MCF 10A (cell line): ENCODE measurements at regions of chr4 and their contacts with region 1.

Region 1: DNA sequence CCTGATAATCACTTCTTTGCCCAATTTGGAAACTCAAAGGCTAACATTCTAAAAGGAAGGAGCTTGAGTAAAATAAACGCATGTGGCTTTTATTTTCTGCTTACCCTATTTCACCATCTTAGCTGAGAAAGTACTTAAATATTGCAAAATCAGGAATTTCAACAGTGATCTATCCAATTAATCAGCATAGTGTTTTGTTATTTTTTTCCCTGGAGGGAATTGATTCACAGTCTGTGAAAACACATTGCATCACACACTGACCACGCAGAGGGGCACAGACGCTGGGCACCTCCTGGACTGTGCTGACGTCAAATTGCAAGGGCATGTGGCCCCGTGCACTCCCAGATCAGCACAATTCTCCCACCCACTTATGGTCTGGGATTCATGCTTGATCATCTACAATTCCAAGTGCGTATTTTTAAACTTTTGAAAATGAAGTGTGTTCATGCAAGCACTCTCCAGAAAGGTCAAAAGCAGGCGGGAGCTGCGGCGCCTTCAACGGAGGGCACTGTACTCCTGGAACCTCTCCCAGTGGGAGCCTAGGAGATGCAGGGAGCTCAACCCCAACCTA is 320.6 kb upstream of the PPARGC1A start:
- DNase-seq: peak; percentile 98
- H3K4me3 Mint-ChIP-seq: peak overlapping the region; percentile 18
- H3K27ac Mint-ChIP-seq: peak overlapping the region; percentile 85
- H3K4me1 Mint-ChIP-seq: peaks cover 36% of the 10 kb centered on the region
- H3K27me3 Mint-ChIP-seq: no peaks in the 10 kb centered on the region
- CTCF ChIP-seq: no peak

Region 2: DNA sequence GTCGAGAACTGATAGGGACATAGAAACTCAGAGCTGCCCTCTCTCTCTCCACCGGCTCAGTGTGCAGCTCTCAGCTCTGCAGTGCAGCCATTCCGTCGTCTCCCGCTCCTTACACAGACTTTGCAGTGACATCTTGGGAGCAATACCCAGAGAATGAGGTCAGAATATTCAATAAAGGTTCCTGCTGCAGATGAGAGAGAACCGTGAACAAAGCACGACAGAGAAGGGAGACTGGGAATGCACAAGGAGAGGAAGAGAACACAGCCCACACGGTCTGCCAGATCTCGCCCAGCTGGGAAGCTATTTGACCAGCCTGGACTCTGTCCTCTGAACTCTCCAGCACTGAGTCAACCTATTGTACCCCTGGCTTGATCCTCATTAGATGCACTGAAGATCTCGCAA is 202.6 kb before region 1 on chr4:
- CTCF ChIA-PET with region 1: no interaction called
- POLR2A ChIA-PET with region 1: interaction called, 3 read pairs
- intact Hi-C with region 1: loop called (anchors 10 kb)
- DNase-seq: no peak
- H3K4me3 Mint-ChIP-seq: no peak overlapping the region
- H3K27ac Mint-ChIP-seq: no peak overlapping the region
- H3K4me1 Mint-ChIP-seq: peaks cover 14% of the 10 kb centered on the region
- H3K27me3 Mint-ChIP-seq: no peaks in the 10 kb centered on the region
- CTCF ChIP-seq: no peak

Region 3: DNA sequence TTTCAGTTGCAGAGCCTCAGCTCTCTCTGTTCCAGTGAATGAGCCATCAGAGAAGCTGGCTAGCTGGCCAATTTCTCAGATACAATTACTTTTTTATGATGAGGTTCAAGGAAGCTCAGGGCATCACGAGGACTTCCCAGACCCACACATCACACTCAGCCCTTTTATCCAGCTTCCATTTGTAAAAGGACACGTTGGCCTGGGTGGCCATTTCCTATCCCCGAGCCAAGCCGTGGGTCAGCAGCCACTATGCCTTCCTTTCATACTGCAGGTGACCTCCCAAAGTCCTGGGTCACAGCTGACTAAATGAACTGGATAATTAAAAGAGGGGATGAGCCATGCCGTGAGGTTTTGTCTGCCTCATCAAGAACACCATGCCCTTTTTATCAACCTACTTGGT is 83.6 kb before region 1 on chr4:
- CTCF ChIA-PET with region 1: no interaction called
- POLR2A ChIA-PET with region 1: interaction called, 11 read pairs
- intact Hi-C with region 1: no loop called
- DNase-seq: no peak
- H3K4me3 Mint-ChIP-seq: no peak overlapping the region
- H3K27ac Mint-ChIP-seq: no peak overlapping the region
- H3K4me1 Mint-ChIP-seq: peaks cover 17% of the 10 kb centered on the region
- H3K27me3 Mint-ChIP-seq: no peaks in the 10 kb centered on the region
- CTCF ChIP-seq: no peak

Region 4: GRCh38 chr4:24273151-24273550 is 62.7 kb after region 1 on chr4:
- CTCF ChIA-PET with region 1: no interaction called
- POLR2A ChIA-PET with region 1: interaction called, 10 read pairs
- intact Hi-C with region 1: no loop called
- DNase-seq: peak; percentile 42
- H3K4me3 Mint-ChIP-seq: peak overlapping the region; percentile 28
- H3K27ac Mint-ChIP-seq: peak overlapping the region; percentile 94
- H3K4me1 Mint-ChIP-seq: peaks cover 20% of the 10 kb centered on the region
- H3K27me3 Mint-ChIP-seq: no peaks in the 10 kb centered on the region
- CTCF ChIP-seq: no peak

Region 5: GRCh38 chr4:24551492-24552289 is 341.3 kb after region 1 on chr4:
- CTCF ChIA-PET with region 1: no interaction called
- POLR2A ChIA-PET with region 1: no interaction called
- intact Hi-C with region 1: no loop called
- DNase-seq: no peak
- H3K4me3 Mint-ChIP-seq: no peak overlapping the region
- H3K27ac Mint-ChIP-seq: no peak overlapping the region
- H3K4me1 Mint-ChIP-seq: peaks cover 18% of the 10 kb centered on the region
- H3K27me3 Mint-ChIP-seq: no peaks in the 10 kb centered on the region
- CTCF ChIP-seq: peak; percentile 43